ENCODE measurements at regions of chr14 and their contacts with region 1.

Region 1: DNA sequence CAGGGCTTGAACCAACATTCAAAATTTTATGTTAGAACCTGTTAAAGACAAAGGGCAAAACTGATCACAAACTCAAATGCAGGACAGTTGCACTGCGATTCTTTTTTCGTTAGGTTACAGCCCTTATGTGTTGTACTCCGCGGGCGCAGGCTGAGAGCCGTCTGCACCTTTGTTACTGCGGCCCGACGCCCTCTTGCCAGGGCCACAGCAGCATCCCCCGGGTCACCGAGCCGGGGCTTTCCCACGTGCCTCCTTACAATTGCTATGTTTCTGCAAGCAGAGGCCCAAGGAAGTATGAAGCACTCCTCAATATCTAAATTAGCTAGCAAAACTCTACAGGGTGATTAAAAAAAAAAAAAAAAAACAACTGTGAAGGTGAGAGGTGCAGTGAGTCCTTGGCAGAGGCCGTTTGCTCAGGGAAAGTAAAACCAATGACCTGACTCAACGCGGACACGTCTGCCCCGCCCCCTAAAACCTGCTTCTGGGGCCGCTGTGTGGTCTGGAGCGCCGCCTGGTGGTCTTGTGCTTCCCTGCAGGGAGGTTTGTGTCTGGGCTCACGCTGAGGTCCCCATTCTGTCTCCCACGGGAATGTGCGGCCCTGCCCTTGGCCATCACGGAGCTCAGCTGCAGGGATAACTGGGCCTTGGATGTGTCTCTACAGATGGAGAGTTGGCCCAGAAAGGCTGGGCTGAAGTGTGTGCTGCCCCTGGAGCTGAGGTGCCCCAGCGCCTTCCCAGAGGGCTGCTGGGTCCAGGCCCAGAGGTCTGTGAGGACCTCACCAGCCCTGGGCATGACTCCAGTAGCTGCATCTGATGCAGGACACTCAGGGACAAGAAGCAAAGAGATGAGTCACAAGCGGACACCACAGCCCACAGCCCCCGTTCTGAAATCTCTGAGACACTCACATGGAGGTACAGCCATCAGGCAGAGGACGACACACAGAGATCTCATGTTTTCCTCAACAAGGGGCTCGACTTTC is 418.5 kb downstream of the TMEM121 start:
- DNase-seq: peak; percentile 61 to 70 (median 64)
- ATAC-seq: peak; percentile 96
- H3K4me3 ChIP-seq: no peak overlapping the region
- H3K27ac ChIP-seq: no peak overlapping the region
- H3K4me1 ChIP-seq: peaks cover 0 to 3% of the 10 kb centered on the region in 2 experiments; a peak in 2 of 5 replicates
- H3K27me3 ChIP-seq: no peaks in the 10 kb centered on the region
- CTCF ChIP-seq: peak; percentile 76 to 83 (median 81)
- EP300 ChIP-seq: no peak
- POLR2A ChIP-seq: no peak
- RAD21 ChIP-seq: peak; percentile 38 to 75; a peak in 3 of 4 replicates

Region 2: DNA sequence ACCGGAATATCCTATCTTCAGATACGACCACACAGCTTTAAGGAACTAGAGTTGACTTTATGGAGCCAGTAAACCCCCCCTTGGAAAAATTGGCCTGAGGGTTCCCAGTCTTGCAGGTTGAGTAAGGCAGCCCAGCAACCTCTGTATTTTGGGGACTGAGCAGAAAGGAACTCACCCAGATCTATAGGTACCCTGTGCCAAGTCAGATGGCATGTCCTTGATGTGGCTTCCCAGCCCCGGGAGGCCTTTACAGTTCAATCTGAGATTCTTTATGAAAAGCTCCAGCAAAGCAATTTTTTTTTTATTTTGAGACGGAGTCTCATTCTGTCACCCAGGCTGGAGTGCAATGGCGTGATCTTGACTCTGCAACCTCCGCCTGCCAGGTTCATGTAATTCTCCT is 390.9 kb before region 1 on chr14:
- CTCF ChIA-PET with region 1: interaction called, 3 read pairs
- POLR2A ChIA-PET with region 1: no interaction called
- in situ Hi-C with region 1: no loop called
- intact Hi-C with region 1: loop called (anchors 10 kb)
- DNase-seq: no peak
- ATAC-seq: no peak
- H3K4me3 ChIP-seq: no peak overlapping the region
- H3K27ac ChIP-seq: no peak overlapping the region
- H3K4me1 ChIP-seq: no peaks in the 10 kb centered on the region
- H3K27me3 ChIP-seq: peaks cover 3 to 19% of the 10 kb centered on the region in 2 experiments; a peak in 4 of 5 replicates
- CTCF ChIP-seq: no peak
- EP300 ChIP-seq: no peak
- POLR2A ChIP-seq: no peak
- RAD21 ChIP-seq: no peak

Region 3: DNA sequence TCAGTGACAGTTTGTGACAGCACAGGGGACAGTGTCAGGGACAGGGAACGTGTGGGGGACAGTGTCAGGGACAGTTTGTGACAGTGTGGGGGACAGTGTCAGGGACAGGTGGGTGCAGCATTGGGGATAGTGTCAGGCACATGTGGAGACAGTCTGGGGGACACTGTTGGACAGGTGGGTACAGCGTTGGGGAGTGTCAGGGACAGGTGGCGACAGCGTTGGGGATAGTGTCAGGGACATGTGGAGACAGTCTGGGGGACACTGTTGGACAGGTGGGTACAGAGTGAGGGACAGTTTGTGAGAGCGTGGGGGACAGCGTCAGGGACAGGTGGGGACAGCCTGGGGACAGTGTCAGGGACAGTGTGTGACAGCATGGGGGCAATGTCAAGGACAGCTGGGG is 278.5 kb before region 1 on chr14:
- CTCF ChIA-PET with region 1: no interaction called
- POLR2A ChIA-PET with region 1: no interaction called
- in situ Hi-C with region 1: no loop called
- intact Hi-C with region 1: loop called (anchors 10 kb)
- DNase-seq: no peak
- ATAC-seq: no peak
- H3K4me3 ChIP-seq: no peak overlapping the region
- H3K27ac ChIP-seq: no peak overlapping the region
- H3K4me1 ChIP-seq: no peaks in the 10 kb centered on the region
- H3K27me3 ChIP-seq: no peaks in the 10 kb centered on the region
- CTCF ChIP-seq: no peak
- EP300 ChIP-seq: no peak
- POLR2A ChIP-seq: no peak
- RAD21 ChIP-seq: no peak

Measured in K562 (cell line).